Lower leg skin (tissue), 4 donors: ENCODE measurements at regions of chr22 and their contacts with region 1.

Region 1: GRCh38 chr22:35023692-35024363 is 42.1 kb upstream of the ISX start:
- DNase-seq: peak; percentile 33 to 92
- H3K4me3 ChIP-seq: no peak overlapping the region
- CTCF ChIP-seq: no peak
- POLR2A ChIP-seq: no peak

Region 2: GRCh38 chr22:33920927-33921524 is 1102.8 kb before region 1 on chr22:
- intact Hi-C with region 1: loop called (anchors 10 kb)
- DNase-seq: peak; percentile 98 to 100
- H3K4me3 ChIP-seq: peak overlapping the region; percentile 23
- CTCF ChIP-seq: no peak
- POLR2A ChIP-seq: no peak